PC-3 (cell line): ENCODE measurements at regions of chr6 and their contacts with region 1.

Region 1: GRCh38 chr6:158704181-158704822 is 54.4 kb downstream of the SYTL3 start:
- DNase-seq: peak; percentile 68
- ATAC-seq: peak; percentile 95
- H3K4me3 ChIP-seq: peak overlapping the region; percentile 63
- H3K27ac ChIP-seq: no peak overlapping the region
- H3K4me1 ChIP-seq: peaks cover 21% of the 10 kb centered on the region
- H3K27me3 ChIP-seq: no peaks in the 10 kb centered on the region
- CTCF ChIP-seq: peak; percentile 94

Region 2: DNA sequence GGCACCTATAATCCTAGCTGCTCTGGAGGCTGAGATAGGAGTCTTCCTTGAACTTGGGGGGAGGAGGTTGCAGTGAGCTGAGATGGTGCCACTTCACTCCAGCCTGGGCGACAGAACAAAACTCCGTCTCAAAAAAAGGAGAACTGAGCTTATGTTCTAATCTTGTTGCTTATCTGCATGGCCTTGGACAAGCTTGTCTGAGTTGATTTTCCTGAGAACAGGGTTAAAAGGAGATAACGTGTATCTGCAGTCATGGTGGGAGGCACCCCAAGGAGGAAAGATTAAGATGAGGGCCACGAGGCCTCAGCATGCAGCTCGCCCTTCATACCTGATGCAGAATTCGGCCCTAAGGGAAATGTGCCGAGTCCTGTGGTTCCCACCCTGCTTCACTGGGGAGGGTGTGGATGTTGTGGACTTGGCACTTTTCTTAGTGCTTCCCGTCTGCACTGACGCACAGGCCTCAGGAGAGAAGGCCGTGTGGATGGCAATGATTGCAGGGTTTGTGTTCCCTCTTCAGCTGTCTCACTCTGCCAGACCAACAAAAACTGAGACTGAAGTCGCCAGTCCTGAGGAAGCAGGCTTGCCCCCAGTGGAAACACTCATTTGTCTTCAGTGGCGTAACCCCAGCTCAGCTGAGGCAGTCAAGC is 58.6 kb after region 1 on chr6:
- CTCF ChIA-PET with region 1: interaction called, 3 read pairs
- POLR2A ChIA-PET with region 1: no interaction called
- intact Hi-C with region 1: loop called (anchors 5 kb)
- DNase-seq: no peak
- ATAC-seq: no peak
- H3K4me3 ChIP-seq: no peak overlapping the region
- H3K27ac ChIP-seq: no peak overlapping the region
- H3K4me1 ChIP-seq: no peaks in the 10 kb centered on the region
- H3K27me3 ChIP-seq: no peaks in the 10 kb centered on the region
- CTCF ChIP-seq: no peak

Region 3: DNA sequence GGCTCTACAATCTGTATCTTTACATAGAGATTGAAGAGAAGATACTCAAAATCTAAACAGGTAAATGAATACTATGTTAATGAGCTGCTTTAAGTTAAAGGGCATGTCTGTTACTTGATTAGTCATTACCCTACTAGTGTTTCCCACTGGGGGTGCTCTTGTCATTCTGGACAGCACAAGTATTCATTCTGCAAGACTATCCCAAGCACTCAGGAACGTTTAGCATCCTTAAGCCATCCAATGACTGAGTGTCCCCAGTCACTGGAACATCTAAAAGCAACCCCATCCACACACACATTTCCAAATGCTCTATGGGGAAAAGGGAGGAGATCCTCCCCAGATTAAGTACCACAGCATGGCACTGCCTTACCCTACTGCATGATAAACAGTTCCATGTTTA is 89.1 kb after region 1 on chr6:
- CTCF ChIA-PET with region 1: no interaction called
- POLR2A ChIA-PET with region 1: no interaction called
- intact Hi-C with region 1: loop called (anchors 10 kb)
- DNase-seq: peak; percentile 57
- ATAC-seq: peak; percentile 87
- H3K4me3 ChIP-seq: no peak overlapping the region
- H3K27ac ChIP-seq: no peak overlapping the region
- H3K4me1 ChIP-seq: no peaks in the 10 kb centered on the region
- H3K27me3 ChIP-seq: no peaks in the 10 kb centered on the region
- CTCF ChIP-seq: peak; percentile 50

Region 4: DNA sequence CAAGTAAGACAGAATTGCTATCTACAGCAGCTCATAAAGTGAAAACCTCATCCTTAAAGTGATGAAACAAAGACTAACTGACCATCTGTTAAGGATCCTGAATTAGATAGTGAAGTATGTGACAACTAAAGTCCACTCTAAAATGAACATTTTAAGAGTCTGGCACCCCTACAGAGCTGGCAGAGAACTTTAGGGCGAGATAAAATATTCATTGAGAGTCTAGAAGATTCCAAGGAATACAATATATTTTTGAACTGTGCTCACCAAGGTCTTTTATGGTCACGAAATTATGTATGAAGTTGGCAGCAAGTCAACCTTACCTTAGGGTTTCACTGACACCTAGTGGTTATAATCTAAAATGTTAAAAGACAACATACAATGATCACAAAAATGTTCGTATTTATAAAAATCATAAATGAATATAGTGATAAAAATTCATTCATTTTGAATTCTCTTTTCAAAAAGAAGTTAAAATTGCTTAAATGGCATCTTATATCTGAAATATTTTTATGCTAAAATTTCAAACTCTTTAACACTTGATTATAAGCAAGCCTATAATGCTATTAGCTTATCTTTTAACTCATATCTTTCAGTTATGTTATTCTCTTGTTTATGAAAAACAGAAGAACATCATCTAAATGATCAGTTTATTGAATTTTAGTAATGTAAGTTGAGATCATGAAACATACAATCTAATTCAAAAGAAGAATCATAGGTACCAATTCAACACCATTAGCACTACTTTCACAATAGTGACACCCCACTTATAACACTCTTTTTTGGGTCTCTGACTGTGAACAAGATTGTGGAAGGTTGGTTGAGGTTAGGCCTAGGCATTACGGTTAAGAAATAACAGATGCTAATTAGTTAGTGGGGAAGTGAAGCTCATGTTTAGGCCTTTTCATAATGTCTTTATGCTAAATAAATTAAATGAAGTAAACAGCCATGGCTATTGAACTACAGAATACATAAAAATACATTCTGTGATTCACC is 268.2 kb after region 1 on chr6:
- CTCF ChIA-PET with region 1: no interaction called
- POLR2A ChIA-PET with region 1: no interaction called
- intact Hi-C with region 1: loop called (anchors 1 kb)
- DNase-seq: peak; percentile 75
- ATAC-seq: peak; percentile 37
- H3K4me3 ChIP-seq: no peak overlapping the region
- H3K27ac ChIP-seq: no peak overlapping the region
- H3K4me1 ChIP-seq: peaks cover 4% of the 10 kb centered on the region; the same call in 1 of the 2 replicates
- H3K27me3 ChIP-seq: no peaks in the 10 kb centered on the region
- CTCF ChIP-seq: peak; percentile 66

Region 5: DNA sequence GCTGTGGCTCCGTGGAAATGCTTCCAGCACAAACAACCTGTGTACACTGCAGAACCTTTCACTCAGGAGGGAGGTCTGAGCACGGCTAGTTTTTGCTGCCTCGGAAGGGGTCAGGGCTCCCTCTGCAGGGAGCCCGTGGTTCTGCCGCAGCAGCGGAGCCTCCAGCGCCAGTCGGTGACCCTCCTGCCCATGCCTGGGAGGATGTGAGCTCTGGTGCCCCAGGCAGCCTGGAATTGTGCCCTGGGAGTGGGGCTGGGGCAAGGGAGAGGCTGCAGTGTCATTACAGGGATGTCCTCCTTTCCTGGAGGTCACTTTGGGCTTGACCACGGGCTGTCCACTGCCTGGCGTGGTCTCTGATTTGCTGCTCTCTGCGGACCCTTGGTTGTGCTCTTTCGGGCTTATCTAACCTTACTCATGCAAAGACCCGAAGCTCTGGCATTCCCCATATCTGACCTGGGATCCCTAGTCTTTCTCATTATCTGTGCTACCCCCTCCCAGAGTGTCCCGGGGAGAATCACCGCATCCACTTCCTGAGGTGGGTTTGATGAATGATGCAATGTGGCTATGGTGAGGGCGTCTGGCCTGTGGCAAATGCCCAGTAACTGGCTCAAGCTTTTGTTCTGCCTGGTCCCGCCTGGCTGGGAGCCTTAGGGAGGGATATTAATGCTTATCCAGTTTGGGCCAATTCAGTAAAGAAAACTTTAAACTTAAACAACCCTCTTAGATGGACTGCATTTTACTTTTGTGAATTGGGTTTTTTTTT is 400.0 kb after region 1 on chr6:
- CTCF ChIA-PET with region 1: no interaction called
- POLR2A ChIA-PET with region 1: no interaction called
- intact Hi-C with region 1: loop called (anchors 10 kb)
- DNase-seq: peak; percentile 69
- ATAC-seq: peak; percentile 96
- H3K4me3 ChIP-seq: no peak overlapping the region
- H3K27ac ChIP-seq: no peak overlapping the region
- H3K4me1 ChIP-seq: no peaks in the 10 kb centered on the region
- H3K27me3 ChIP-seq: no peaks in the 10 kb centered on the region
- CTCF ChIP-seq: peak; percentile 83